Endothelial cell of umbilical vein (primary cell): ENCODE measurements at regions of chr15 and their contacts with region 1.

Region 1: GRCh38 chr15:88649286-88649733 is 10.5 kb downstream of the ISG20 start:
- DNase-seq: peak; percentile 95
- H3K4me3 ChIP-seq: no peak overlapping the region
- H3K27ac ChIP-seq: peak overlapping the region; percentile 99
- H3K4me1 ChIP-seq: peaks cover 35% of the 10 kb centered on the region
- H3K27me3 ChIP-seq: no peaks in the 10 kb centered on the region
- CTCF ChIP-seq: no peak
- POLR2A ChIP-seq: no peak

Region 2: GRCh38 chr15:88630131-88630721 is 19.1 kb before region 1 on chr15:
- CTCF ChIA-PET with region 1: no interaction called
- POLR2A ChIA-PET with region 1: no interaction called
- dilution Hi-C with region 1: no loop called
- intact Hi-C with region 1: loop called (anchors 2 kb)
- DNase-seq: peak; percentile 55
- H3K4me3 ChIP-seq: no peak overlapping the region
- H3K27ac ChIP-seq: peak overlapping the region; percentile 26
- H3K4me1 ChIP-seq: peaks cover 19% of the 10 kb centered on the region
- H3K27me3 ChIP-seq: no peaks in the 10 kb centered on the region
- CTCF ChIP-seq: no peak
- POLR2A ChIP-seq: peak; percentile 60

Region 3: GRCh38 chr15:88638626-88639372 is 10.5 kb before region 1 on chr15 and contains the start of gene ISG20:
- CTCF ChIA-PET with region 1: interaction called, 11 read pairs
- POLR2A ChIA-PET with region 1: interaction called, 7 read pairs
- dilution Hi-C with region 1: no loop called
- intact Hi-C with region 1: loop called (anchors 1 kb)
- DNase-seq: peak; percentile 99
- H3K4me3 ChIP-seq: peak within 1 kb of the TSS in 1 of 3 experiments; percentile 24
- H3K27ac ChIP-seq: peak within 1 kb of the TSS; percentile 86
- H3K4me1 ChIP-seq: peaks cover 21% of the 10 kb centered on the region
- H3K27me3 ChIP-seq: no peaks in the 10 kb centered on the region
- CTCF ChIP-seq: peak; percentile 30 to 54
- POLR2A ChIP-seq: peak; percentile 75
- total RNA-seq, gene ISG20: 5.4 and 6.4 TPM in 2 replicates